H1 (cell line): ENCODE measurements at regions of chr10 and their contacts with region 1.

Region 1: GRCh38 chr10:86399879-86400704 is 33.5 kb upstream of the GRID1 start:
- DNase-seq: peak; percentile 94 to 99
- H3K4me3 ChIP-seq: peak overlapping the region; percentile 33 to 71 (median 62)
- H3K27ac ChIP-seq: no peak overlapping the region
- H3K4me1 ChIP-seq: peaks cover 0 to 7% (median 5%) of the 10 kb centered on the region in 4 experiments; a peak in 6 of 7 replicates
- H3K27me3 ChIP-seq: peaks cover 8 to 34% (median 31%) of the 10 kb centered on the region in 4 experiments
- CTCF ChIP-seq: peak; percentile 81 to 92 (median 88)
- EP300 ChIP-seq: 0 out of 3 replicates have a peak, but pooled peaks of 1 of the 2 experiments have one; percentile 7
- POLR2A ChIP-seq: no peak; a peak in 1 of 3 replicates
- RAD21 ChIP-seq: peak; percentile 87 to 91

Region 2: DNA sequence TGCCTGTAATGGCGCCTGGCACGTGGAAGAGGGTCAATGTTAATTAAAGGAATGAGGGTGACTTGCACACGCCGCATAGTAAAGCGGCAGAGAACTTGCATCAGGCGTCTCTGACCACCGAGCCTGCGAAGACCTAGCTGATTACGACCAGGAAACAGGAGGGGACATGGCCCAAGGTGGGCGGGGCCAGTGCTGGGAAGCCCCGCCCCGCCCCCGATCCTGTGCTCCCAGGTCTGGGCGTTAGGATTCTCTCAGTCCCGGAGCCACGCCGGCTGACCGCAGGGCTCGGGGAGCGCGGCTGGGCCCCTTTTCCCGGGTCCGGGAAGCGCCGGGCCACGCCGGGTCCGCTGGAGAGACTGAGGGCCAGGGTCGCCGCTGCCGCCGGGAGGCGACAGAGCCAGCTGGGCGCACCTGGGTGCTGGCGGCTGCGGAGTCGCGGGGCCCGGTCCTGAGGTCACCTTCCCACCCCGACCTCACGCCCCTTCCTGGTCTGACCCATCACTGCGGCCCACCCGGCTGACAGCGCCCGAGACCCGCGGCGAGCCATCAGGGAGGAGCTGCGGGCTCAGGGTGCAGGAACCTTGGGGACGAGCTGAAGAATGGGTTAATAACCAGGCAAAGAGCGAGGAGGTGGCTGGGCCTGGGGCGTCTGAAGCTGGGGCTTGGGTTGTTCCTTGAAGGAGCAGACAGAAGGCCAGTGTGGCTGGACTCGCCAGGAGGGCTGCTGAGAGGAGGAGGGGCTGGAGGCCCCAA is 10.5 kb before region 1 on chr10:
- CTCF ChIA-PET with region 1: interaction called, 15 read pairs
- POLR2A ChIA-PET with region 1: interaction called, 30 read pairs
- DNase-seq: peak; percentile 69 to 93
- H3K4me3 ChIP-seq: peak overlapping the region; percentile 48 to 75 (median 58)
- H3K27ac ChIP-seq: no peak overlapping the region
- H3K4me1 ChIP-seq: peaks cover 0 to 16% (median 5%) of the 10 kb centered on the region in 4 experiments; a peak in 5 of 7 replicates
- H3K27me3 ChIP-seq: peaks cover 0 to 15% (median 11%) of the 10 kb centered on the region in 4 experiments; a peak in 4 of 7 replicates
- CTCF ChIP-seq: no peak
- EP300 ChIP-seq: no peak
- POLR2A ChIP-seq: peak in 1 of 2 experiments; percentile 78; a peak in 2 of 3 replicates
- RAD21 ChIP-seq: no peak; a peak in 1 of 4 replicates